ENCODE measurements at regions of chr9 and their contacts with region 1.

Region 1: GRCh38 chr9:133532937-133533668 is 1.4 kb upstream of the ADAMTSL2 start:
- DNase-seq: peak; percentile 69 to 81 (median 74)
- ATAC-seq: peak; percentile 40 to 81 (median 60)
- H3K4me3 ChIP-seq: no peak overlapping the region
- H3K27ac ChIP-seq: peak overlapping the region in 3 of 12 donors; percentile 54 to 81 (median 75)
- H3K4me1 ChIP-seq: peaks cover 0 to 57% (median 25%) of the 10 kb centered on the region in 12 donors
- H3K27me3 ChIP-seq: peaks cover 0 to 24% (median 0%) of the 10 kb centered on the region in 9 donors
- CTCF ChIP-seq: peak in 11 of 12 donors; percentile 43 to 70 (median 54)
- POLR2A ChIP-seq: no peak

Region 2: GRCh38 chr9:133238851-133239532 is 294.1 kb before region 1 on chr9:
- intact Hi-C with region 1: no loop called
- DNase-seq: peak; percentile 54 to 82 (median 66)
- ATAC-seq: peak; percentile 43 to 73 (median 65)
- H3K4me3 ChIP-seq: peak overlapping the region in 11 of 12 donors; percentile 18 to 59 (median 45)
- H3K27ac ChIP-seq: peak overlapping the region; percentile 65 to 95 (median 88)
- H3K4me1 ChIP-seq: peaks cover 0 to 30% (median 21%) of the 10 kb centered on the region in 12 donors
- H3K27me3 ChIP-seq: no peaks in the 10 kb centered on the region
- CTCF ChIP-seq: peak; percentile 64 to 87 (median 78)
- POLR2A ChIP-seq: no peak

Region 3: DNA sequence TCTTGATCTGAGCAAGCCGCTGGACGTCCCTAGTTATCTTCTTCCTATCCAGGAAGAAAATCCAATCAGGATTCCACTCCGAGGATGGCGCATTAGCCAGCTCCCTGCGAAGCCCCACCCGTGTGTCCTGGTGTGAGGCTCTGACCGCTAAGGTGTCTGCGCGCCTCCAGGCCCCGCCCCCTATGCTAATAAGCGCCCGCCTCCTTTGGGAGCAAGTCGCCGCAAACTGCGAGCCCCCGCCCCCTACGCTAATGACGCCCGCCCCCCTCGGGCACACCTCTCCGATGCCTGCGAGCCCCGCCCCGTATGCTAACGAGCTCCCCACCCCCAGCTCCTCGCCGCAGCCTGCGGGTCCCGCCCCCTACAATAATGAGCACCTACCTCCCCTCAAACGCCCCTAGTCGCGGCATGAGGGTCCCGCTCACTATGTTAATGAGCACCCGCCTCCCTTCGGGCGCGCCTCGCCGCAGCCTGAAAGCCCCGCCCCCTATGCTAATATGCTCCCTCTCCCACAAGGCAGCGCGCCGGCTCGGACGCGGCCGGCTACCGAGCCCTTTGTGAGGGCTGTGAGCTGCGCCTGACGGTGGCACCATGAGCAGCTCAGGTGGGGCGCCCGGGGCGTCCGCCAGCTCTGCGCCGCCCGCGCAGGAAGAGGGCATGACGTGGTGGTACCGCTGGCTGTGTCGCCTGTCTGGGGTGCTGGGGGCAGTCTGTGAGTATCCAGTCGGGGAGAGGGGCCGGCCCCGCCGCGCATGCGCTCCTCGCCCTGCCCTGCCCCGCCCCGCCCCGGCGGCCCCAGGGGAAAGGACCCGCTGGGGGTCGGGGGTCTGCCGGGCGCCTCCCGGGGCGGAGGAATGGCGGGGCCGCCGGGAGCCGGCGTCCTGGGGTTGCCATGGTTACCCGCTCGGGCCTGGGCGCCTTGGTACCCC is 73.4 kb before region 1 on chr9 and contains the start of gene CACFD1:
- intact Hi-C with region 1: no loop called
- DNase-seq: peak; percentile 95 to 97 (median 97)
- ATAC-seq: peak; percentile 93 to 96 (median 94)
- H3K4me3 ChIP-seq: peak within 1 kb of the TSS; percentile 56 to 97 (median 84)
- H3K27ac ChIP-seq: peak within 1 kb of the TSS; percentile 81 to 98 (median 92)
- H3K4me1 ChIP-seq: peaks cover 0 to 21% (median 13%) of the 10 kb centered on the region in 12 donors
- H3K27me3 ChIP-seq: no peaks in the 10 kb centered on the region
- CTCF ChIP-seq: no peak
- POLR2A ChIP-seq: peak in 1 of 2 donors; percentile 76
- total RNA-seq, gene CACFD1: 8.0 to 15.3 (median 11.6) TPM

Region 4: GRCh38 chr9:133572821-133573361 is 39.8 kb after region 1 on chr9:
- intact Hi-C with region 1: loop called in 1 of 10 experiments (anchors 5 kb)
- DNase-seq: peak; percentile 76 to 92 (median 86)
- ATAC-seq: peak; percentile 90 to 97 (median 93)
- H3K4me3 ChIP-seq: no peak overlapping the region
- H3K27ac ChIP-seq: peak overlapping the region in 4 of 12 donors; percentile 29 to 57 (median 39)
- H3K4me1 ChIP-seq: peaks cover 0 to 35% (median 14%) of the 10 kb centered on the region in 12 donors
- H3K27me3 ChIP-seq: peaks cover 0 to 10% (median 0%) of the 10 kb centered on the region in 9 donors
- CTCF ChIP-seq: no peak
- POLR2A ChIP-seq: no peak

Region 5: GRCh38 chr9:133581513-133582343 is 48.6 kb after region 1 on chr9:
- intact Hi-C with region 1: loop called in 2 of 10 experiments (anchors 2 to 5 kb)
- DNase-seq: peak in 4 of 5 donors; percentile 47 to 79 (median 68)
- ATAC-seq: peak in 3 of 4 donors; percentile 1 to 27 (median 18)
- H3K4me3 ChIP-seq: no peak overlapping the region
- H3K27ac ChIP-seq: peak overlapping the region in 7 of 12 donors; percentile 16 to 61 (median 30)
- H3K4me1 ChIP-seq: peaks cover 4 to 56% (median 27%) of the 10 kb centered on the region in 12 donors
- H3K27me3 ChIP-seq: peaks cover 8 to 30% (median 15%) of the 10 kb centered on the region in 9 donors
- CTCF ChIP-seq: no peak
- POLR2A ChIP-seq: no peak

Region 6: GRCh38 chr9:133589454-133590227 is 56.5 kb after region 1 on chr9:
- intact Hi-C with region 1: loop called in 1 of 10 experiments (anchors 5 kb)
- DNase-seq: peak in 2 of 5 donors; percentile 19 to 57
- ATAC-seq: no peak
- H3K4me3 ChIP-seq: no peak overlapping the region
- H3K27ac ChIP-seq: no peak overlapping the region
- H3K4me1 ChIP-seq: peaks cover 0 to 16% (median 8%) of the 10 kb centered on the region in 12 donors
- H3K27me3 ChIP-seq: peaks cover 9 to 34% (median 20%) of the 10 kb centered on the region in 9 donors
- CTCF ChIP-seq: peak in 11 of 12 donors; percentile 18 to 54 (median 43)
- POLR2A ChIP-seq: no peak

Region 7: DNA sequence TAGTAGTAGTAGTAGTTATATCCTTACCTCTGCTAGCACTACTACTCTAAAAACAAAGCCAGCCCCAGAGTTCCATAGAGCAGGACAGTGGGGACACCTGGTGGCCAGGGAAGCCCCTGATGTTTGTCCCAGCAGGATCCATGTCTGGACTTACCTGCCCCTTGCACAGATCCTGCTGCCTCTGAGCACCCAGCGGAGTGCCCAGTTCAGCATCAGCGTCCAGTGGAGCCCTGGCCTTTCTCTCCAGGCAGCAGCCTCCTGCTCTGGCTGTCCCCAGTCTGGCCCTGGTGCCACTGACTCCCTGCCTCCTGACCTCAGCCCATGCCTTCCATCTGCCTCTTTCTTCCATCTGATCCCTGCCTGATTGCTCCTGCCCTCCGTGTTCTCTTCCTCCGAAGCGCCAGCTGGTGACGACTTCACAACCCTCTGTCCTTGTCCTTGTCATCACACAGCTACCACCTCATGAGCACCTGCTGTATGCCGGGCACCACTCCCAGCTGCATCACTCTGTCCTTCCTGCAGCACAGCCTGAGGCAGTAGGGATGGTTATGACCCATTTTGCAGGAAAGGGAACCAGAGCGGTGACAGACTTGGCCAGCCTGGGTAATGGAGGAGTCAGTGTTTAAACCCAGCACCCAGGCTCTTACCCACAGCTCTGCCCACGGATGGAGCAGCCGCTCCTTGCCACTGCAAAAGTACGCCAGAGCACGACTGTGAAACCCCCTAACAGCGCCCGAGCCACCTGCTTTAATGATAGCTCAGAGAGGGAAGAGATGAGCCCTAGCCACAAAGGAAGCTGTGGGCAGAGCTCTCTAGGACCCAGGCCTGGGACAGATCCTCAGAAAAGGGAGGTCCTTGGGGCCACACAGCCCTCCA is 193.5 kb after region 1 on chr9:
- intact Hi-C with region 1: loop called (anchors 1 to 5 kb)
- DNase-seq: peak; percentile 49 to 76 (median 56)
- ATAC-seq: peak; percentile 44 to 86 (median 76)
- H3K4me3 ChIP-seq: no peak overlapping the region
- H3K27ac ChIP-seq: no peak overlapping the region
- H3K4me1 ChIP-seq: no peaks in the 10 kb centered on the region
- H3K27me3 ChIP-seq: peaks cover 0 to 20% (median 4%) of the 10 kb centered on the region in 9 donors
- CTCF ChIP-seq: peak; percentile 49 to 74 (median 64)
- POLR2A ChIP-seq: no peak

Region 8: DNA sequence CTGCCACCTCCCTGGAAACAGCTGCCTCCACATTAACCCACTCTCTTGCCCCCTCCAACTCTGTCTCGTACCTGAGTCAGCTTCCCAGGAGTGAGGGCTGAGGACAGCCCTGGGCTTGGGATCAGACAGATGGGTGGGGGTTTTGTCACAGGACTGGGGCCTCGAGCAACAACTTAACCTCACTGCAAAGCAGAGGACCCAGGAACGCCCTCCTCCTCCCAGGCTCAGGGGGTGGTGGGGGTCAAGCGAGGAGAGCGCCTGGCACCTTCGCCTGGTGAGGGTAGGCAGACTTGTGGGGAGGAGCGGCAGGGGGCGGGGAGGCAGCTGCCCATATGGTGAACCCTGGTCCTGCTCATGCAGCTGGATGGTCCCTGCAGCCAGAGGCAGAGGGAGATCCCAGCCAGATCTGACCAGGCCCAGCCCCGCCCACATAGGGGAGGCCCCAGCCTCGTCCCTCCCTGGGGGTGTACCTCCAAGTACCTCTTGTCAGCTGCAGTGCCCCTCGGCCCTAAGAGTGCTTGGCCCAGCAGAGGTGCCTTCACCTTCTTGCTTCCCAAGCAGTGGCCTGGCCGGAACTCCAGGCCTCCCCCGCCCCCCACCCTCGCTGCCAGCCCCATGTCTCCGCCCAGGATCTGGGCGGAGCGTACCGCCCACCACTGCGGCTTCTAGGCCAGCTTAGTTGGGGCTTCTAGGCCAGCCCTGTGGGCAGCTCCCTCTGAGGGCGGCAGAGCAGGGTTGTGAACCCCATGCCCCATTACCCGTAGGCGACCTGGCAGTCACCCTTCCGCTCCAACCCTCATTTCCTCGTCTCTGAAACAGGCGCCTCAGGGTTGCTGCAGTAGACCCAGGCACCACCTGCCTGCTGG is 204.9 kb after region 1 on chr9 and contains the start of gene SARDH:
- intact Hi-C with region 1: no loop called
- DNase-seq: peak in 4 of 5 donors; percentile 47 to 59 (median 52)
- ATAC-seq: peak; percentile 43 to 75 (median 72)
- H3K4me3 ChIP-seq: peak within 1 kb of the TSS in 10 of 12 donors; percentile 22 to 63 (median 50)
- H3K27ac ChIP-seq: no peak within 1 kb of the TSS
- H3K4me1 ChIP-seq: peaks cover 0 to 19% (median 5%) of the 10 kb centered on the region in 12 donors
- H3K27me3 ChIP-seq: peaks cover 0 to 7% (median 0%) of the 10 kb centered on the region in 9 donors
- CTCF ChIP-seq: no peak
- POLR2A ChIP-seq: no peak
- total RNA-seq, gene SARDH: 0.23 to 1.7 (median 0.70) TPM

Region 9: DNA sequence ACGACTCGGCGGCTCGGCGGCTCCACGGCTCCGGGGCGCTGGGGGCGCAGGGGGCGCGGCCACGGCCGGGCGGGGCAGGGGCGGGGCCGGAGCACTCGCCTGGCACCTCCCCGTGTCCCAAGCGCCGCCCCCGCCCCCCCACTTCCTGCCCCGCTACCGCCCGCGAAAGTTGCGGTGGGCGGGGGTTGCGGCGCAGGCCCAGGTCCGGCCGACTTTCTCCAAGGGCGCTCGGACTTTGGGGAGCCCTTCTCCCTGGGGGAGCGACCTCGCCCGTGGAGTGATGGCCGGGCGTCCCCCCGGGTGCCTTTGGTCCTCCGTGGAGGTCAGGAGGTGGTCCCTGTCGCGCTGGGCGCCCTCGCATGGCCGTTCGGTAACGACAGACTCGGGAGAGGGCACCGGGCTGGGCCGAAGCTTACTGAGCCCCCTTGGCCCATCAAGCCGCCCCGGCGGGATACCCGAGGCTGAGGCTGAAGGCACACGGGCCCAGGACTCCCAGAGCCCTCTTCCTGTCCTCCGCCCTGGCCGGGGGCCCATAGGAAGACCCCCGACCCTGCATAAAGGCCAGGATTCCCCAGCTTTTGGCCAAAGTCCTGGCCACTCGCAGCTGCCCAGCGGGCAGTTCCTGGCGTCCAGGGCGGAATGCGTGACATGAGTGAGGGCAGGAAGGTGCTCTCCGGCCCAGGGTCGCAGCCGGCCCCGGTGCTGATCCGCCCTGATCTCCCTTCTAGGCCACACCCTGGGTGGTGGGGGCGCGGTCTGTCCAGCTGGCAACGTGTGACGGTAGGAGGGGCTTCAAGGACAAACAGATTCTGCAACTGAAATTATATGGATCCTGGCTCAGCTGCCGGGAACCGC is 459.9 kb after region 1 on chr9:
- intact Hi-C with region 1: loop called in 1 of 10 experiments (anchors 10 kb)
- DNase-seq: peak; percentile 84 to 90 (median 88)
- ATAC-seq: peak; percentile 68 to 87 (median 80)
- H3K4me3 ChIP-seq: peak overlapping the region; percentile 53 to 88 (median 73)
- H3K27ac ChIP-seq: peak overlapping the region; percentile 60 to 95 (median 92)
- H3K4me1 ChIP-seq: peaks cover 4 to 31% (median 20%) of the 10 kb centered on the region in 12 donors
- H3K27me3 ChIP-seq: peaks cover 0 to 4% (median 0%) of the 10 kb centered on the region in 9 donors
- CTCF ChIP-seq: peak in 11 of 12 donors; percentile 10 to 66 (median 41)
- POLR2A ChIP-seq: peak in 1 of 2 donors; percentile 49